Right cardiac atrium (tissue), 5 donors: ENCODE measurements at regions of chr17 and their contacts with region 1.

Region 1: DNA sequence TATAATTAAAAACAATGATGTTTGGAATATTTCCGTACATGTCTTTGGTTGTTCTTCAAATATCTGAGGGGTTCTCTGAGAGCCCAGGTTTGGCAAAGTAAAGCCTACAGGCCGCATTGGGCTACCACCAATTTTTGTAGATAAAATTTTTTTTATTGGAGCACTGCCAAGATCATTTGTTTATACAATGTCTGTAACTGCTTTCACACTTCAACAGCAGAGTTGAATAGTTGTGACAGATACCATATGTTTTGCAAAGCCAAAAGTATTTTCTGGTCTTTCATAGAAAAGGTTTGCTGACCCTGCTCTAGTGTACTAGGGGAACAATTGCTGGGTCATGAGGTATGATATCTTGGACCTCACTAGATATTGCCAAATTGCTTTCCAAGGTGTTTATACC is 10.5 kb downstream of the PPM1D start:
- DNase-seq: no peak
- ATAC-seq: no peak
- H3K4me3 ChIP-seq: no peak overlapping the region
- H3K27ac ChIP-seq: no peak overlapping the region
- H3K4me1 ChIP-seq: no peaks in the 10 kb centered on the region
- H3K27me3 ChIP-seq: no peaks in the 10 kb centered on the region

Region 2: GRCh38 chr17:60506312-60506711 is 104.2 kb before region 1 on chr17:
- intact Hi-C with region 1: no loop called
- DNase-seq: no peak
- ATAC-seq: peak in 1 of 2 donors; percentile 35
- H3K4me3 ChIP-seq: no peak overlapping the region
- H3K27ac ChIP-seq: no peak overlapping the region
- H3K4me1 ChIP-seq: peaks cover 10% of the 10 kb centered on the region
- H3K27me3 ChIP-seq: no peaks in the 10 kb centered on the region

Region 3: DNA sequence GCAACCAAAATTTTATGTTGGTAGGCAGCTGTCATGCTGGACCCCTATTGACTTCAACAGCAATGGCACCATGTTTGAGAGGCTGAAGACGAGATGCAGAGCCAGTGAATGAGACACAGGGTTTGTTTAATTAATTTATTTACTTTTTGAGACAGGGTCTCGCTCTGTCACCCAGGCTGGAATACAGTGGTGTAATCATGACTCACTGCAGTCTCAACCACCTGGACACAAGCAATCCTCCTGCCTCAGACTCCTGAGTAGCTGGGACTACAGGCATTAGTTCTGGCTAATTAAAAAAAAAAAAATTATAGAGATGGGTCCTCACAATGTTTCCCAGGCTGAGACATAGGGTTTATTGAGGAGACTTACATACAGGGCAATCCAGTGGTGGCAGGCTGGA is 46.7 kb before region 1 on chr17:
- intact Hi-C with region 1: loop called in 1 of 4 experiments (anchors 10 kb)
- DNase-seq: no peak
- ATAC-seq: no peak
- H3K4me3 ChIP-seq: no peak overlapping the region
- H3K27ac ChIP-seq: no peak overlapping the region
- H3K4me1 ChIP-seq: no peaks in the 10 kb centered on the region
- H3K27me3 ChIP-seq: no peaks in the 10 kb centered on the region

Region 4: GRCh38 chr17:60599620-60600489 is 10.6 kb before region 1 on chr17 and contains the start of gene PPM1D:
- intact Hi-C with region 1: no loop called
- DNase-seq: peak; percentile 100
- ATAC-seq: peak; percentile 98 to 99
- H3K4me3 ChIP-seq: peak within 1 kb of the TSS; percentile 95
- H3K27ac ChIP-seq: peak within 1 kb of the TSS; percentile 98
- H3K4me1 ChIP-seq: peaks cover 3% of the 10 kb centered on the region
- H3K27me3 ChIP-seq: no peaks in the 10 kb centered on the region
- total RNA-seq, gene PPM1D: 7.5 to 10.0 (median 8.9) TPM